Ovary (tissue), 10 donors: ENCODE measurements at regions of chr15 and their contacts with region 1.

Region 1: GRCh38 chr15:29747837-29748417 is 74.3 kb downstream of the TJP1 start:
- DNase-seq: no peak
- H3K4me3 ChIP-seq: no peak overlapping the region
- H3K27ac ChIP-seq: no peak overlapping the region
- H3K4me1 ChIP-seq: no peaks in the 10 kb centered on the region
- H3K27me3 ChIP-seq: no peaks in the 10 kb centered on the region
- CTCF ChIP-seq: peak in 1 of 3 donors; percentile 38
- EP300 ChIP-seq: no peak
- POLR2A ChIP-seq: no peak

Region 2: GRCh38 chr15:29925227-29926082 is 177.5 kb after region 1 on chr15:
- intact Hi-C with region 1: loop called in 2 of 4 experiments (anchors 5 to 10 kb)
- DNase-seq: peak; percentile 35 to 72 (median 53)
- H3K4me3 ChIP-seq: no peak overlapping the region
- H3K27ac ChIP-seq: no peak overlapping the region
- H3K4me1 ChIP-seq: peaks cover 6% of the 10 kb centered on the region
- H3K27me3 ChIP-seq: peaks cover 3% of the 10 kb centered on the region
- CTCF ChIP-seq: peak in 2 of 3 donors; percentile 31 to 44
- EP300 ChIP-seq: no peak
- POLR2A ChIP-seq: no peak

Region 3: DNA sequence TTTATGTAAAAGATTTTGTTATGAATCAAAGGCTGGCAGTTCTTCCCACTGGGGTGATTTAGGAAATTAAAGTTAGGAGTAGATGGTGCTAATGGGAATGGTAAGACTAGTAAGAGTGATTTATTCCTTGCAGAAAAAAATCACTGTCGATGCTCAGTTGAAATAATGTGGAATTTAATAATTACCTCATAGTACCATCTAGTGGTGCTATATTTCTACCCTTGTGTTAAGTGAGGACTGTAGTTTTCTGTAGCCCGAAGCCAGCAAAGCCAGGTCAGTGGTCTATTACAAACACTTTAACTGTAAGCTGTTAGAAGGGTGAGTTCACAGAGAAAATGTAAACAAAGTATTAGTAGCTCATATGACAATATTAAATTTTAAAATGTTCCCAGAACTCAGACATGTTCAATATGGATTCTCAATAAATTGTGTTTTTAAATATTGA is 295.3 kb after region 1 on chr15:
- intact Hi-C with region 1: loop called in 1 of 4 experiments (anchors 10 kb)
- DNase-seq: no peak
- H3K4me3 ChIP-seq: no peak overlapping the region
- H3K27ac ChIP-seq: no peak overlapping the region
- H3K4me1 ChIP-seq: peaks cover 1% of the 10 kb centered on the region
- H3K27me3 ChIP-seq: no peaks in the 10 kb centered on the region
- CTCF ChIP-seq: peak; percentile 8 to 24 (median 10)
- EP300 ChIP-seq: no peak
- POLR2A ChIP-seq: no peak

Region 4: DNA sequence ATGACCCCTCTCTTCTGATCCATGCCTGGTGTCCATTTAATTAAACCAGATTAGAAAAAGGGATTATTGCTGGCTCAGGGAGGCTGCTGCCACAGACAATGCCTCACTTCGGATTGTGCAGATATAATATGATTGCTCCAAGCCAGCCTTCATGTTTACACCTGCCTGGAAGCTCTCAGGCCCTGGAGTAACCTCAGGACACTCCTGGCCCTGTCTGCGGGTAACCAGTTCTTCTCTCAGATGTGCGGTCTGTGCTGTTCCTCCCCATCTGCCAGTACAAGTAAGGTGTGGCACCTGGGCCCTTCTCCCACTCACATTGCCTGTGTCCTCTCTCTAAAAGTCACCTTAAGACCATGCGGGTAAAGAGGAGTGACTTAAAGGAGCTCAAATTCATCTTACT is 326.0 kb after region 1 on chr15:
- intact Hi-C with region 1: loop called in 2 of 4 experiments (anchors 10 kb)
- DNase-seq: no peak
- H3K4me3 ChIP-seq: no peak overlapping the region
- H3K27ac ChIP-seq: no peak overlapping the region
- H3K4me1 ChIP-seq: no peaks in the 10 kb centered on the region
- H3K27me3 ChIP-seq: no peaks in the 10 kb centered on the region
- CTCF ChIP-seq: no peak
- EP300 ChIP-seq: no peak
- POLR2A ChIP-seq: no peak